Activated naive CD4-positive, alpha-beta T cell treated with anti-CD3 and anti-CD28 coated beads for 36 hours (primary cell): ENCODE measurements at regions of chr4 and their contacts with region 1.

Region 1: DNA sequence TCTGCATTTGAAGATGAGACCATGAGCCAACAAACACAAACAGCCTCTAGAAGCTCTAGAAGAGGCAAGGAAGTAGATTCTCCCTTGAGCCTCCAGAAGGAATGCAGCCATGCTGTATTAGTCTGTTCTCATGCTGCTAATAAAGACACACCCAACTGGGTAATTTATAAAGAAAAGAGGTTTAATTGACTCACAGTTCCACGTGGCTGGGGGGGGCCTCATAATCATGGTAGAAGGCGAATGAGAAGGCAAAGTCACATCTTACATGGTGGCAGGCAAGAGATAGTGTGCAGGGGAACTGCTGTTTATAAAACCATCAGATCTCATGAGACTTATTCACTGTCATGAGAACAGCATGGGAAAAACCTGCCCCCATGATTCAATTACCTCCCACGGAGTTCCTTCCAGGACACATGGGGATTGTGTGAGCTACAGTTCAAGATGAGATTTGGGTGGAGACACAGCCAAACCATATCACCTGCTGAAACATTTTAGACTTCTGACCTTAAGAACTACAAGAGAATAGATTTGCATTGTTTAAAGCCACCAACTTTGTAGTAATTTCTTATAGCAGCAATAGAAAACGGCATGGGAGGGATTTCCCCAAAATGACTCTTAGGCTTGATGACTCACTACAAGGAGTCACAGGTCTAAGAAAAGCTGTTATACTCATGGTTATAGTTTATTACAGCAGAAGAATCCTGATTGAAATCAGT is 284.4 kb upstream of the SFRP2 start:
- DNase-seq: peak; percentile 37
- H3K4me3 Mint-ChIP-seq: no peak overlapping the region
- H3K27ac Mint-ChIP-seq: peak overlapping the region; percentile 46
- H3K4me1 Mint-ChIP-seq: peaks cover 8% of the 10 kb centered on the region
- H3K27me3 Mint-ChIP-seq: peaks cover 21% of the 10 kb centered on the region

Region 2: DNA sequence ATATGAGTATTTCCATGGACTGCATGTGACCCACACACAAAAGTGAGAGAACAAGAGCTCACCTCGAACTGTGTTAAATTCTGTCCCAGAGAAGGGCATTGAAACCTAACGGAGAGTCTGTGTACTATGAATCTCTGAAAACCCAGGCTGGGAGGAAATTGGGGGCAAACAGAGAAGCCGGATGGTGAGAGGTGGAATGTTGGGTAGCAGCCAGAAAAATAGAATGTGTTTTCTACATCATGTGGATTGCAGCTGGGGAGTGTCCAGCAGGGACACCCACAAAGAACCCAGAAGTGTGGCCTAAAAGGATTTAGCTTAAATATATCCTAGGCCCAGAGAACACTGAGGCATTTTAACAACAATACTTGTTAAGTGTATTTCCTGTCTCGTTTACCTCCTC is 690.1 kb before region 1 on chr4:
- CTCF ChIA-PET with region 1: no interaction called
- intact Hi-C with region 1: no loop called
- DNase-seq: no peak
- H3K4me3 Mint-ChIP-seq: no peak overlapping the region
- H3K27ac Mint-ChIP-seq: no peak overlapping the region
- H3K4me1 Mint-ChIP-seq: no peaks in the 10 kb centered on the region
- H3K27me3 Mint-ChIP-seq: no peaks in the 10 kb centered on the region

Region 3: GRCh38 chr4:153748380-153748779 is 324.9 kb before region 1 on chr4:
- CTCF ChIA-PET with region 1: no interaction called
- intact Hi-C with region 1: no loop called
- DNase-seq: no peak
- H3K4me3 Mint-ChIP-seq: no peak overlapping the region
- H3K27ac Mint-ChIP-seq: no peak overlapping the region
- H3K4me1 Mint-ChIP-seq: peaks cover 2% of the 10 kb centered on the region
- H3K27me3 Mint-ChIP-seq: no peaks in the 10 kb centered on the region

Region 4: DNA sequence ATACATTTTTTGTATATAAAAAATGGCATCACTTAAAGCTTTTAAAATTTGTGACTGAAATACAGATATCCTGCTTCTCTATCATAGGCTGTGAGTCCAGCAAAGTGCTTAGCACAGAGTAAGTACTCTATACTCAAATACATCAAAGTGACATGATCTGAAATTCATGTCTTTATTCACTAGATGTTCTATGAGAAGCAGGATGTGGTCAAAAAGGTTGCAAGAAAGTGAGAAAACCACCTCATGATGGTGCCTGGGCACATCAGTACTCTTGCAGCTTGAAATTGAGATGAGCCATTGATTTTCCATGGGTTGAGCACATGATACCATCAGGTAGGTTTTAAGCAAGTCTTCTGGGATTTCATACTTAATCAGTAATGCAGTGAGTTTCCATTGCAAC is 264.0 kb before region 1 on chr4:
- CTCF ChIA-PET with region 1: no interaction called
- intact Hi-C with region 1: loop called (anchors 2 kb)
- DNase-seq: peak; percentile 59
- H3K4me3 Mint-ChIP-seq: no peak overlapping the region
- H3K27ac Mint-ChIP-seq: no peak overlapping the region
- H3K4me1 Mint-ChIP-seq: peaks cover 17% of the 10 kb centered on the region
- H3K27me3 Mint-ChIP-seq: no peaks in the 10 kb centered on the region

Region 5: GRCh38 chr4:153950100-153950979 is 122.9 kb before region 1 on chr4:
- CTCF ChIA-PET with region 1: no interaction called
- intact Hi-C with region 1: no loop called
- DNase-seq: peak; percentile 31
- H3K4me3 Mint-ChIP-seq: no peak overlapping the region
- H3K27ac Mint-ChIP-seq: no peak overlapping the region
- H3K4me1 Mint-ChIP-seq: peaks cover 18% of the 10 kb centered on the region
- H3K27me3 Mint-ChIP-seq: peaks cover 11% of the 10 kb centered on the region